K562 (cell line): ENCODE measurements at regions of chr16 and their contacts with region 1.

Region 1: GRCh38 chr16:20849587-20850390 is 43.5 kb downstream of the REXO5 start:
- DNase-seq: peak; percentile 46 to 74 (median 48)
- ATAC-seq: peak; percentile 79
- H3K4me3 ChIP-seq: no peak overlapping the region
- H3K27ac ChIP-seq: no peak overlapping the region
- H3K4me1 ChIP-seq: no peaks in the 10 kb centered on the region; a peak in 1 of 5 replicates
- H3K27me3 ChIP-seq: no peaks in the 10 kb centered on the region
- CTCF ChIP-seq: peak; percentile 87 to 95 (median 92)
- EP300 ChIP-seq: no peak
- POLR2A ChIP-seq: no peak
- RAD21 ChIP-seq: peak; percentile 98

Region 2: GRCh38 chr16:20735490-20735889 is 114.3 kb before region 1 on chr16:
- CTCF ChIA-PET with region 1: no interaction called
- POLR2A ChIA-PET with region 1: no interaction called
- in situ Hi-C with region 1: no loop called
- intact Hi-C with region 1: no loop called
- DNase-seq: no peak
- ATAC-seq: no peak
- H3K4me3 ChIP-seq: no peak overlapping the region
- H3K27ac ChIP-seq: no peak overlapping the region
- H3K4me1 ChIP-seq: peaks cover 6 to 14% of the 10 kb centered on the region in 2 experiments; a peak in 4 of 5 replicates
- H3K27me3 ChIP-seq: no peaks in the 10 kb centered on the region
- CTCF ChIP-seq: no peak
- EP300 ChIP-seq: no peak; the same call in 1 of the 2 replicates
- POLR2A ChIP-seq: no peak
- RAD21 ChIP-seq: no peak

Region 3: GRCh38 chr16:20900299-20901067 is 50.7 kb after region 1 on chr16 and contains the starts of genes DCUN1D3 and LYRM1:
- CTCF ChIA-PET with region 1: no interaction called
- POLR2A ChIA-PET with region 1: interaction called, 6 read pairs
- in situ Hi-C with region 1: no loop called
- intact Hi-C with region 1: loop called (anchors 5 kb)
- DNase-seq: peak; percentile 95 to 99 (median 96)
- ATAC-seq: peak; percentile 95
- H3K4me3 ChIP-seq: peak within 1 kb of the TSS; percentile 85
- H3K27ac ChIP-seq: peak within 1 kb of the TSS; percentile 92
- H3K4me1 ChIP-seq: peaks cover 32 to 50% of the 10 kb centered on the region in 2 experiments
- H3K27me3 ChIP-seq: no peaks in the 10 kb centered on the region
- CTCF ChIP-seq: no peak
- EP300 ChIP-seq: no peak
- POLR2A ChIP-seq: peak; percentile 83
- RAD21 ChIP-seq: 0 out of 4 replicates have a peak, but pooled peaks of 1 of the 2 experiments have one; percentile 4
- polyA plus RNA-seq, gene DCUN1D3: 1.0 to 1.9 TPM
- polyA plus RNA-seq, gene LYRM1: 40.0 to 44.1 TPM

Region 4: GRCh38 chr16:20956319-20956718 is 106.5 kb after region 1 on chr16:
- CTCF ChIA-PET with region 1: interaction called, 5 read pairs
- POLR2A ChIA-PET with region 1: no interaction called
- in situ Hi-C with region 1: no loop called
- intact Hi-C with region 1: loop called (anchors 1 kb)
- DNase-seq: no peak
- ATAC-seq: peak; percentile 81
- H3K4me3 ChIP-seq: no peak overlapping the region
- H3K27ac ChIP-seq: no peak overlapping the region
- H3K4me1 ChIP-seq: peaks cover 7 to 8% of the 10 kb centered on the region in 2 experiments; a peak in 1 of 5 replicates
- H3K27me3 ChIP-seq: no peaks in the 10 kb centered on the region
- CTCF ChIP-seq: peak in 2 of 3 experiments; percentile 21 to 58; a peak in 2 of 6 replicates
- EP300 ChIP-seq: no peak
- POLR2A ChIP-seq: no peak
- RAD21 ChIP-seq: peak; percentile 36 to 70; a peak in 3 of 4 replicates

Region 5: DNA sequence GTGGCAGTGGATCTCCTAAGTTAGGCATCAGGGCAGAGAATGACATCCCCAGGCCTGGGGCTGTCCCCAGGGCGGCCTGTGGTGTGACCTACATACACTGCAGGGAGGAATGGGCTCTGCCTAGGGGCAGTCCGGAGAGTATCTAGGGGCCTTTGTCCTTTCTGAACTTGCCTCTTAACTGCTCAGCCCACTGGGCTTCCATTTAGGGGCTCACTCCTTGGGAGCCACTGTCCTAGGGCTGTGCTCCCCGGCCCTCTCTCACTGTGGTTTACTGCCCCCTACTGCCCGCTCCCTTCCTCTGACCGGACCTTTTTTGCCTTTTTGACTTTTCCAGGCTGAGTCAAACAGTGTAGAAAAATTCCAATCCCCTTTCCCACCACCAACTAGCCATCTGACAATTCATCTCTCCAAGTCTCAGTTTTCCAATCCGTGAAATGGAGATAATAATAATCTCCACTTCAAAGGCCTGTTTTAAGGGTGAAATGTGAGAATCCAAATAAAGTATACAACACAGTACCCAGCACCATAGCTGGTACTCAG is 234.0 kb after region 1 on chr16:
- CTCF ChIA-PET with region 1: interaction called, 41 read pairs
- POLR2A ChIA-PET with region 1: no interaction called
- in situ Hi-C with region 1: loop called (anchors 5 kb)
- intact Hi-C with region 1: loop called (anchors 1 kb)
- DNase-seq: peak; percentile 52 to 67 (median 60)
- ATAC-seq: peak; percentile 98
- H3K4me3 ChIP-seq: no peak overlapping the region
- H3K27ac ChIP-seq: no peak overlapping the region
- H3K4me1 ChIP-seq: no peaks in the 10 kb centered on the region; a peak in 1 of 5 replicates
- H3K27me3 ChIP-seq: peaks cover 0 to 7% of the 10 kb centered on the region in 2 experiments; a peak in 2 of 5 replicates
- CTCF ChIP-seq: peak; percentile 75 to 88 (median 83)
- EP300 ChIP-seq: no peak
- POLR2A ChIP-seq: no peak
- RAD21 ChIP-seq: peak; percentile 92 to 94

Region 6: GRCh38 chr16:21101631-21102420 is 252.0 kb after region 1 on chr16:
- CTCF ChIA-PET with region 1: interaction called, 16 read pairs
- POLR2A ChIA-PET with region 1: no interaction called
- in situ Hi-C with region 1: no loop called
- intact Hi-C with region 1: no loop called
- DNase-seq: peak in 2 of 4 experiments; percentile 50 to 51
- ATAC-seq: peak; percentile 93
- H3K4me3 ChIP-seq: no peak overlapping the region
- H3K27ac ChIP-seq: no peak overlapping the region
- H3K4me1 ChIP-seq: no peaks in the 10 kb centered on the region; a peak in 1 of 5 replicates
- H3K27me3 ChIP-seq: peaks cover 16 to 18% of the 10 kb centered on the region in 2 experiments
- CTCF ChIP-seq: peak; percentile 58 to 69 (median 65)
- EP300 ChIP-seq: no peak
- POLR2A ChIP-seq: no peak
- RAD21 ChIP-seq: peak; percentile 41 to 69; a peak in 3 of 4 replicates